ENCODE measurements at regions of chr13 and their contacts with region 1.

Region 1: DNA sequence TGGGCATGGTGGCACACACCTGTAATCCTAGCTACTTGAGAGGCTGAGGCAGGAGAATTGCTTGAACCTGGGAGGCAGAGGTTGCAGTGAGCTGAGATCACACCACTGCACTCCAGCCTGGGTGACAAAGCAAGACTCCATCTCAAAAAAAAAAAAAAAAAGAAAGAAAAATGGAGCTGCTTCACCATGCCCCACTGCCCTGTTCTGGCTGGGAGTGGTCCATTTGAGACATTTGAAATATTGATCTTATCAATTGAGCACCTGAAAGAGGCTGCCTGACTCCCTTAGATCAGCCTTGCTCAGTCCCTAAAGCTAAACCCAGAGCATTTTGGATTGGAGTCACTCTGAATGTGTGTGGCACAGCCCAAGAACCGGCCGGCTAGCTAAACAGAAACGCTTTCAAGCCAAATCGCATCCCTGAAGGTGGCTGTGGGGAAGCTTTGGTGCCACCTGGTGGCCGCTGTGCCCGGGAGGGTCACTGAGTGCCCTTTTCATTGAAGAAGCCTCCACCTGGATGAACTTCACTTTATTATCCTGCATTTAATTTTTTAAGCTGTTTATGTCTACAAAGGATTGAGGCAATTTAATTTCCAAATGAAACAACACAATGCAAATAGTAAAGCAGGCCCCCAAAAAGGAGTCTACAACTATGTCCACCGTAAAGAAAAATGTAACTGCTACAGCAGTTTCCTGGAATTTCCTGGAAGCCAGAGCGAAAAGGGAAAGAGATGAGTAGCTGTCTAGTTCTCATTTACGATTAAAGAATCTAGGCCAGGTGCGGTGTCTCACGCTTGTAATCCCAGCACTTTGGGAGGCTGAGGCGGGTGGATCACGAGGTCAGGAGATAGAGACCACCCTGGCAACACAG is 53.1 kb upstream of the SERPINE3 start:
- DNase-seq: peak; percentile 11 to 77 (median 46)
- ATAC-seq: peak; percentile 76
- H3K4me3 ChIP-seq: no peak overlapping the region
- H3K4me3 Mint-ChIP-seq: no peak overlapping the region
- H3K27ac ChIP-seq: no peak overlapping the region
- H3K27ac Mint-ChIP-seq: no peak overlapping the region
- H3K4me1 ChIP-seq: no peaks in the 10 kb centered on the region
- H3K4me1 Mint-ChIP-seq: peaks cover 0 to 25% (median 0%) of the 10 kb centered on the region in 7 donors
- H3K27me3 ChIP-seq: no peaks in the 10 kb centered on the region
- H3K27me3 Mint-ChIP-seq: peaks cover 0 to 9% (median 0%) of the 10 kb centered on the region in 5 donors

Region 2: GRCh38 chr13:51125498-51126226 is 160.7 kb before region 1 on chr13:
- CTCF ChIA-PET with region 1: no interaction called
- POLR2A ChIA-PET with region 1: no interaction called
- intact Hi-C with region 1: loop called in 1 of 2 experiments (anchors 1 kb)
- DNase-seq: peak in 6 of 9 donors; percentile 11 to 41 (median 26)
- ATAC-seq: peak; percentile 80
- H3K4me3 ChIP-seq: no peak overlapping the region
- H3K4me3 Mint-ChIP-seq: no peak overlapping the region
- H3K27ac ChIP-seq: no peak overlapping the region
- H3K27ac Mint-ChIP-seq: no peak overlapping the region
- H3K4me1 ChIP-seq: no peaks in the 10 kb centered on the region
- H3K4me1 Mint-ChIP-seq: peaks cover 0 to 13% (median 0%) of the 10 kb centered on the region in 7 donors
- H3K27me3 ChIP-seq: no peaks in the 10 kb centered on the region
- H3K27me3 Mint-ChIP-seq: peaks cover 0 to 21% (median 13%) of the 10 kb centered on the region in 5 donors

Region 3: GRCh38 chr13:51148952-51149573 is 137.3 kb before region 1 on chr13:
- CTCF ChIA-PET with region 1: no interaction called
- POLR2A ChIA-PET with region 1: no interaction called
- intact Hi-C with region 1: loop called in 1 of 2 experiments (anchors 1 kb)
- DNase-seq: no peak
- ATAC-seq: no peak
- H3K4me3 ChIP-seq: no peak overlapping the region
- H3K4me3 Mint-ChIP-seq: no peak overlapping the region
- H3K27ac ChIP-seq: no peak overlapping the region
- H3K27ac Mint-ChIP-seq: peak overlapping the region in 2 of 9 donors; percentile 23 to 62
- H3K4me1 ChIP-seq: no peaks in the 10 kb centered on the region
- H3K4me1 Mint-ChIP-seq: peaks cover 4 to 5% (median 5%) of the 10 kb centered on the region in 7 donors
- H3K27me3 ChIP-seq: no peaks in the 10 kb centered on the region
- H3K27me3 Mint-ChIP-seq: peaks cover 4 to 26% (median 8%) of the 10 kb centered on the region in 5 donors

Region 4: GRCh38 chr13:51222037-51222685 is 64.2 kb before region 1 on chr13 and contains the start of gene FAM124A:
- CTCF ChIA-PET with region 1: no interaction called
- POLR2A ChIA-PET with region 1: no interaction called
- intact Hi-C with region 1: loop called (anchors 2 kb)
- DNase-seq: peak in 7 of 9 donors; percentile 9 to 75 (median 21)
- ATAC-seq: peak; percentile 85
- H3K4me3 ChIP-seq: peak within 1 kb of the TSS; percentile 31
- H3K4me3 Mint-ChIP-seq: peak within 1 kb of the TSS; percentile 64 to 82 (median 78)
- H3K27ac ChIP-seq: no peak within 1 kb of the TSS
- H3K27ac Mint-ChIP-seq: no peak within 1 kb of the TSS
- H3K4me1 ChIP-seq: peaks cover 0 to 4% of the 10 kb centered on the region in 2 donors
- H3K4me1 Mint-ChIP-seq: peaks cover 0 to 12% (median 0%) of the 10 kb centered on the region in 7 donors
- H3K27me3 ChIP-seq: peaks cover 4 to 10% of the 10 kb centered on the region in 2 donors
- H3K27me3 Mint-ChIP-seq: peaks cover 42 to 62% (median 54%) of the 10 kb centered on the region in 5 donors
- total RNA-seq, gene FAM124A: 0.12 to 0.85 TPM in 2 of 5 experiments, not detected in the others

Region 5: DNA sequence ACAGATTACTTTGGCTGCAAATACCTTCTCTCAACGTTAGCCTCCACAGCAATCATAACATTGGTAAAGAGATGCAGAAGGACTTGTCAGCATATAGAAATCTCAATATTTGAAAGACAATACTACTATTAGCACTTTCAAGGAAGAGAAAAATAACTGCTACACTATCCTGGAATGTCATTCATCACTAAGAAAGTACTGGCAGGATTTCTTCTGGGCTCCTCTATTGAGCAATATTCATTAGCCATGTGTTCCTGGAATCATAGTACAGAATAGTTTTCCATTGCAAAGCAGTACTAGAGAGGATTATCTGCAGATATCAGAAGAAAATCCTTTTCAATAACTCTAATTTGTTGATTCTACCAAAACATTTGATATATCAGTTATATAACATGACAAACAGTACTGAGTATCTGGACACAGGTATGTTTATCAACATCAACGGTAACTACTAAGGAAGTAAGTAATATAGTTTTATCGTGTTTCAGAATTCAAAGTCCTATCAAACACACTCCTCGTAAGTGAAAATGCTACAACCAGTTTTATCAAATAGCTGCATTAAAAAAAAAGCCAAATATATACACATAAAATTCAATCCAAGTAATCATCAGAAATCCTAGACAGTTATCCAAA is 139.2 kb after region 1 on chr13:
- CTCF ChIA-PET with region 1: no interaction called
- POLR2A ChIA-PET with region 1: no interaction called
- intact Hi-C with region 1: no loop called
- DNase-seq: no peak
- ATAC-seq: no peak
- H3K4me3 ChIP-seq: no peak overlapping the region
- H3K4me3 Mint-ChIP-seq: peak overlapping the region in 4 of 10 donors; percentile 16 to 60 (median 40)
- H3K27ac ChIP-seq: no peak overlapping the region
- H3K27ac Mint-ChIP-seq: peak overlapping the region in 3 of 9 donors; percentile 52 to 64 (median 64)
- H3K4me1 ChIP-seq: peaks cover 23 to 35% of the 10 kb centered on the region in 2 donors
- H3K4me1 Mint-ChIP-seq: peaks cover 48 to 92% (median 87%) of the 10 kb centered on the region in 7 donors
- H3K27me3 ChIP-seq: no peaks in the 10 kb centered on the region
- H3K27me3 Mint-ChIP-seq: no peaks in the 10 kb centered on the region

Measured in naive thymus-derived CD4-positive, alpha-beta T cell (primary cell).